Activated T-helper 2 cell treated with anti-CD3 and anti-CD28 coated beads, Interferon-gamma antibody, Interleukin-2, Interleukin-4, amounts not matched to agents 10 μg/mL and 5 μg/mL and 100 μg/mL, durations not matched to agents 14 hours and 24 hours and 36 hours (primary cell): ENCODE measurements at regions of chrX and their contacts with region 1.

Region 1: GRCh38 chrX:15335135-15336022 is at the start of gene PIGA:
- DNase-seq: peak; percentile 90
- H3K4me3 Mint-ChIP-seq: peak within 1 kb of the TSS; percentile 89
- H3K27ac Mint-ChIP-seq: peak within 1 kb of the TSS; percentile 89
- H3K4me1 Mint-ChIP-seq: peaks cover 12% of the 10 kb centered on the region
- H3K27me3 Mint-ChIP-seq: peaks cover 6% of the 10 kb centered on the region
- total RNA-seq, gene PIGA: 40.6 and 43.3 TPM in 2 replicates

Region 2: GRCh38 chrX:14738643-14739042 is 596.7 kb before region 1 on chrX:
- intact Hi-C with region 1: no loop called
- DNase-seq: no peak
- H3K4me3 Mint-ChIP-seq: no peak overlapping the region
- H3K27ac Mint-ChIP-seq: no peak overlapping the region
- H3K4me1 Mint-ChIP-seq: no peaks in the 10 kb centered on the region
- H3K27me3 Mint-ChIP-seq: no peaks in the 10 kb centered on the region

Region 3: DNA sequence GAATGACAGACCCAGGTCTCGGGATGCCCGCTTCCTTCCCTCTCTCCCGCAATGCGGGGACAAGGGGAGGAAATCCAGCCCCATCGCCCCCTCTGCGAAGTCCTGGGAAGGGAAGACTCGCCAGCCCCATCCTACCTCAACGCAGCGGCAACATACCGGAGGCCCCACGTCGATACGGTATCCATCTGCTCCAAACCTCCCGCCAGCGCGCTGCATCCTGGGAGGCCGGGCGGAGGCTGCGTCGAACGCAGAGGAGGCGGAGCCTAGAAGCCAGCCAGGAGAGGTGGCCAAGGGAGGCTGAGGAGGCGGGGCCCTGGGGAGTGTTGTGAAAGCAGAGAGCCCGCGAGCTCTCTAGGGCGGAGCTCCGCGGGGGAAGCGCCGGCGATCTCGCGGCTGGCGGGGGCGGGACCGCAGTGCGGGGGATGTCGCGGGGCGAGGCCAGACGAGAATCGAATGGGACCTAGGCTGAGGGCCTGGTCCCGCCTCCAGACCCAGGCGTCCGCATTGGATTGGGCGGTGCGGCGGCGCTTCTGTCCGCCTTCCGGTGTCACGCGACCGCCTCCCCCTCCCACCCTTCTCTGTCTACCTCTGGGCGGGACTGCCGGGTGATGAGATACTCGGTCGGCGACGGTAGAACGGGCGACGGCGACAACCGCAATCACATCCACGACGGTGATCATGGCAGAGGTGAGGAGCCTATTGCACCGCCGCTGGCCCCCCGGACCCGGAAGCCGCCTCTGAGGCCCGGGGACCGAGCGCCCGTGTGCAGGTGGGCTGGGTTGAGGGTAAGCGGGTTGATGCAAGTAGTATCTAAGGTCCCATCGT is 462.3 kb before region 1 on chrX and contains the starts of genes FANCB and MOSPD2:
- intact Hi-C with region 1: loop called (anchors 1 kb)
- DNase-seq: peak; percentile 93
- H3K4me3 Mint-ChIP-seq: peak within 1 kb of the TSS; percentile 83
- H3K27ac Mint-ChIP-seq: peak within 1 kb of the TSS; percentile 80
- H3K4me1 Mint-ChIP-seq: peaks cover 27% of the 10 kb centered on the region
- H3K27me3 Mint-ChIP-seq: no peaks in the 10 kb centered on the region
- total RNA-seq, gene FANCB: 14.2 and 14.6 TPM in 2 replicates
- total RNA-seq, gene MOSPD2: 12.6 and 14.8 TPM in 2 replicates

Region 4: GRCh38 chrX:15493118-15493962 is 158.0 kb after region 1 on chrX and contains the start of gene PIR:
- intact Hi-C with region 1: loop called (anchors 10 kb)
- DNase-seq: peak; percentile 55
- H3K4me3 Mint-ChIP-seq: peak within 1 kb of the TSS; percentile 81
- H3K27ac Mint-ChIP-seq: peak within 1 kb of the TSS; percentile 47
- H3K4me1 Mint-ChIP-seq: peaks cover 20% of the 10 kb centered on the region
- H3K27me3 Mint-ChIP-seq: peaks cover 5% of the 10 kb centered on the region
- total RNA-seq, gene PIR: 5.1 and 5.9 TPM in 2 replicates

Region 5: GRCh38 chrX:15579778-15580747 is 244.7 kb after region 1 on chrX:
- intact Hi-C with region 1: no loop called
- DNase-seq: no peak
- H3K4me3 Mint-ChIP-seq: no peak overlapping the region
- H3K27ac Mint-ChIP-seq: no peak overlapping the region
- H3K4me1 Mint-ChIP-seq: no peaks in the 10 kb centered on the region
- H3K27me3 Mint-ChIP-seq: peaks cover 3% of the 10 kb centered on the region

Region 6: GRCh38 chrX:15737960-15738902 is 402.9 kb after region 1 on chrX and contains the start of gene CA5B:
- intact Hi-C with region 1: loop called (anchors 1 kb)
- DNase-seq: peak; percentile 94
- H3K4me3 Mint-ChIP-seq: peak within 1 kb of the TSS; percentile 82
- H3K27ac Mint-ChIP-seq: peak within 1 kb of the TSS; percentile 75
- H3K4me1 Mint-ChIP-seq: peaks cover 23% of the 10 kb centered on the region
- H3K27me3 Mint-ChIP-seq: no peaks in the 10 kb centered on the region
- total RNA-seq, gene CA5B: 5.2 and 8.0 TPM in 2 replicates

Region 7: GRCh38 chrX:16552546-16552945 is 1217.2 kb after region 1 on chrX:
- intact Hi-C with region 1: no loop called
- DNase-seq: no peak
- H3K4me3 Mint-ChIP-seq: no peak overlapping the region
- H3K27ac Mint-ChIP-seq: no peak overlapping the region
- H3K4me1 Mint-ChIP-seq: no peaks in the 10 kb centered on the region
- H3K27me3 Mint-ChIP-seq: no peaks in the 10 kb centered on the region